HEK293 (cell line): ENCODE measurements at regions of chr5 and their contacts with region 1.

Region 1: GRCh38 chr5:126339215-126339805 is 83.9 kb upstream of the GRAMD2B start:
- H3K4me3 ChIP-seq: no peak overlapping the region
- H3K27ac ChIP-seq: no peak overlapping the region
- H3K4me1 ChIP-seq: no peaks in the 10 kb centered on the region
- CTCF ChIP-seq: peak; percentile 36; the same call in 1 of the 2 replicates

Region 2: DNA sequence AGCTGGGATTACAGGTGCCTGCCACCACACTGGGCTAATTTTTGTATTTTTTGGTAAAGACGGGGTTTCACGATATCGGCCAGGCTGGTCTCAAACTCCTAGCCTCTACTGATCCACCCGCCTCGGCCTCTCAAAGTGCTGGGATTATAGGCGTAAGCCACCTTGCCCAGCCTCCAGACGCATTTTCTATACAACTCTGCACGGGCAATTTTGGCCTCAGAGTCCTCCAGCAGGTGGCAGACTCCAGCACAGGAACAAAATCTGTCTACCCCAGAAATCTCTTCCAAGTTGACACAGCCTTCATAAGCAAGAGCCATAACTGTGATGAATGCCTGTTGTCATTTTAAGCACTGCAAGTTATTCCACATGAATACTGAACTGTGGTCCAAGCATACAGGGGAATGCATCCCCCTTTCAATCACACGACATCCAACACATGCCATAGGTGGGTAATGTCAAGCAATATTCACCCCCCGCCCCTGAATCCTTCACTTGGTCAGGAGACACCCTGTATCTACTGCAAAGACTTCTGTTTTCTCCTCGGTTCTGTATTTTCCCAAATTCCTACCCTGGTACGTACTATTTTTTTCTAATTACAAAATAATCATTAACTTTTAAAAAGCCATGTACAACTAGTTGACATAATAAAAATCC is 204.9 kb after region 1 on chr5:
- CTCF ChIA-PET with region 1: interaction called, 65 read pairs
- POLR2A ChIA-PET with region 1: no interaction called
- H3K4me3 ChIP-seq: no peak overlapping the region
- H3K27ac ChIP-seq: no peak overlapping the region
- H3K4me1 ChIP-seq: no peaks in the 10 kb centered on the region
- CTCF ChIP-seq: no peak; the same call in 1 of the 2 replicates